A549 (cell line): ENCODE measurements at regions of chr16 and their contacts with region 1.

Region 1: GRCh38 chr16:67816240-67817031 is 9.7 kb downstream of the TSNAXIP1 start:
- DNase-seq: peak; percentile 79 to 80
- ATAC-seq: peak; percentile 93 to 94
- H3K4me3 ChIP-seq: no peak overlapping the region
- H3K27ac ChIP-seq: no peak overlapping the region
- H3K4me1 ChIP-seq: no peaks in the 10 kb centered on the region
- CTCF ChIP-seq: peak; percentile 100
- EP300 ChIP-seq: no peak
- POLR2A ChIP-seq: no peak
- RAD21 ChIP-seq: peak; percentile 82 to 84

Region 2: GRCh38 chr16:67555795-67556212 is 260.6 kb before region 1 on chr16:
- CTCF ChIA-PET with region 1: no interaction called
- POLR2A ChIA-PET with region 1: no interaction called
- DNase-seq: no peak
- ATAC-seq: peak in 1 of 2 experiments; percentile 29; a peak in 3 of 6 replicates
- H3K4me3 ChIP-seq: no peak overlapping the region
- H3K27ac ChIP-seq: peak overlapping the region in 1 of 2 experiments; percentile 16; a peak in 3 of 6 replicates
- H3K4me1 ChIP-seq: peaks cover 13% of the 10 kb centered on the region
- CTCF ChIP-seq: no peak
- EP300 ChIP-seq: no peak
- POLR2A ChIP-seq: no peak
- RAD21 ChIP-seq: no peak

Region 3: GRCh38 chr16:67657801-67658513 is 158.5 kb before region 1 on chr16:
- CTCF ChIA-PET with region 1: no interaction called
- POLR2A ChIA-PET with region 1: no interaction called
- DNase-seq: no peak
- ATAC-seq: no peak
- H3K4me3 ChIP-seq: no peak overlapping the region
- H3K27ac ChIP-seq: no peak overlapping the region
- H3K4me1 ChIP-seq: peaks cover 12% of the 10 kb centered on the region; the same call in 2 of the 3 replicates
- CTCF ChIP-seq: no peak
- EP300 ChIP-seq: no peak
- POLR2A ChIP-seq: no peak
- RAD21 ChIP-seq: no peak

Region 4: DNA sequence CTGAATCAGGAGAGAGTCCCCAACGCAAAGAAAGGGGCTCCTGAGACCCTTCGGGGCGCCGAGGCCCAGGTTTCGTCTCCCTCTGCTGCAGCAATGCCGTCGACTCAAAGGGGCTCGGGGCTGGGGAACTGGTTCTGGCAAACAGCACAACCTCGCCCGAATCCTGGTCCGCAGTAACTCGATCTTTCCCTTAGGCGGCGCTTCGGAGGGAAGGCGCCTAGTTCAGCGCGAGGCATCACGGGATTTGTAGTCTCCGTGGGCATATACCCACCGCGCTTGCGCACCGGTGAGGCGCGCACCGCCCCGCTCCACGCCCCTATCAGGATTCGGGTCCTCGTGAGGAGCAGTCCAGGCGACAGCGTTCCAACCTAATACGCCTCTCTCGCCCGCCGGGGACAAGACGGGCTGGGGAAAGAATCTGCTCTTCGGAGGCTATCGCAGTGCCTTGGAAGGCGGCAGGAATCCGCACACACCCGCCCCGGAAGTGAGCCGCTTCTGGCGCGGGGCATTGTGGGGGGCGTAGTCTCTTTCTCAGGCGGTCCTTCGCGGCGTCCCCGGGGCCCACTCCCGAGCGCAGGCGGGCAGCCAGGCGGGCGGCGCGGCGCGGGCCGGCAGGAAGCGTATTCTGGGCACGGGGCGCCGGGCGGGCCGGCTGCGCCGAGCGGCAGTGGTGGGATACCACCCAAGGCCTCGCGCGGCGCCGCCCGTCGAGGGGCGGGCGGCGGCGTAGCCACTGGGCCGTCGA is 25.5 kb after region 1 on chr16 and contains the start of gene THAP11:
- CTCF ChIA-PET with region 1: interaction called, 187 read pairs
- POLR2A ChIA-PET with region 1: interaction called, 3 read pairs
- DNase-seq: peak; percentile 88 to 96
- ATAC-seq: peak; percentile 65 to 70
- H3K4me3 ChIP-seq: peak within 1 kb of the TSS; percentile 58
- H3K27ac ChIP-seq: peak within 1 kb of the TSS; percentile 97 to 98
- H3K4me1 ChIP-seq: peaks cover 33% of the 10 kb centered on the region
- CTCF ChIP-seq: peak; percentile 58
- EP300 ChIP-seq: no peak
- POLR2A ChIP-seq: peak; percentile 56
- RAD21 ChIP-seq: 0 out of 5 replicates have a peak, but pooled peaks of 1 of the 2 experiments have one; percentile 29
- polyA plus RNA-seq, gene THAP11: 33.2 and 44.0 TPM in 2 replicates

Region 5: DNA sequence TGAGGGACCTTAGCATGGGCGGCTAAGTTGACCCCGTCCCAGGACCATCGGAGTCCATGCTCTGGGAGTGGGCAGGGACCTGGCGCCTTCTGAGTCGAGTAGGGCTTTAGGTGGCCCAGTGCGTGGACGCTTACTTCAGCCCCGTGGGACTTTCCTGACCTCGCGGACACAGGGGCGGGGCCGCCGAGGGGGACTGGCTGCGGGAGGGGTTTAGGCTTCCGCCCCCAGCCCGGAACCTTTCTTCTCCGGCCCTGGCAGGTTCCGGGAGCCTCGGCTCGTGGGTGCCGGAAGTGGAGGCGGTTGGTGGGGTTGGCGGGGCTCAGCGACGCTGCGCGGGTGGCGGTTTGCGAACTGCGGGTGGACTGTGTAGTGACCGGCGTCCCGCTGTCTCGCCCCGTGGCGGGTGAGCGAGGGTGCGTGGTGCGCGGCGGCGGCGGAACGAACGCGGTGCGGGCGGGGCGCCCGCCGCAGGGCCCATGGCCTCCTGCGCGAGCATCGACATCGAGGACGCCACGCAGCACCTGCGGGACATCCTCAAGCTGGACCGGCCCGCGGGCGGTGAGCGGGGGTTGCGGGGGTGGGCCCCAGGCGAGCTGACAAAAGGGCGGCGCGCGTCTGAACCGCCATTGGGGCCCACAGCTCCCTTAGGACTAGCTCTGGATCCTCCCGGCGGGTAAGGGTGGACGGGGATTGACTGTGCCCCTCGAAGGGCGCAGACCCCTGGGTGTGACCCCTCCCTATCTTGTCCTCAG is 56.5 kb after region 1 on chr16 and contains the start of gene EDC4:
- CTCF ChIA-PET with region 1: interaction called, 65 read pairs
- POLR2A ChIA-PET with region 1: no interaction called
- DNase-seq: peak; percentile 83 to 89
- ATAC-seq: peak; percentile 87 to 92
- H3K4me3 ChIP-seq: peak within 1 kb of the TSS; percentile 99
- H3K27ac ChIP-seq: peak within 1 kb of the TSS; percentile 95 to 97
- H3K4me1 ChIP-seq: peaks cover 24% of the 10 kb centered on the region; the same call in 2 of the 3 replicates
- CTCF ChIP-seq: no peak
- EP300 ChIP-seq: peak in 1 of 2 experiments; percentile 7; a peak in 1 of 5 replicates
- POLR2A ChIP-seq: peak; percentile 83
- RAD21 ChIP-seq: no peak
- polyA plus RNA-seq, gene EDC4: 21.0 and 35.3 TPM in 2 replicates

Region 6: GRCh38 chr16:67917852-67918236 is 101.4 kb after region 1 on chr16:
- CTCF ChIA-PET with region 1: interaction called, 49 read pairs
- POLR2A ChIA-PET with region 1: no interaction called
- DNase-seq: peak; percentile 62 to 88
- ATAC-seq: peak; percentile 89 to 90
- H3K4me3 ChIP-seq: no peak overlapping the region
- H3K27ac ChIP-seq: peak overlapping the region in 1 of 2 experiments; percentile 2; a peak in 1 of 6 replicates
- H3K4me1 ChIP-seq: peaks cover 16% of the 10 kb centered on the region
- CTCF ChIP-seq: no peak
- EP300 ChIP-seq: no peak
- POLR2A ChIP-seq: no peak
- RAD21 ChIP-seq: no peak

Region 7: DNA sequence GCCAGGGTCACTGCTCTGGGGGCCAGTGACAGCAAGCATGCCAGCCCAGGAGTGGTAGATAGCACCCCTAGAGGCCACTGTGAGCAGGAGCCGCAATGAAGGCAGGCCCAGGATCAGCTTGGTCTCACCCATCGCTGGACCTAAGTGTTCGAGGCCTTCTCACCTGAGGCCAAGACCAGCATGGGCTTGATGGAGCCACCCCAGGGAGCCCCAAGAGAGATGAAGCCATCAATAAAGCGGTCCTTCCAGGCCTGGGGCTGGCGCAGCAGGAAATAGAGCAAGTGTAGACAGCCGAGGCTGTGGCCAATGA is 125.7 kb after region 1 on chr16:
- CTCF ChIA-PET with region 1: interaction called, 26 read pairs
- POLR2A ChIA-PET with region 1: no interaction called
- DNase-seq: peak; percentile 66 to 67
- ATAC-seq: peak; percentile 79 to 85
- H3K4me3 ChIP-seq: no peak overlapping the region
- H3K27ac ChIP-seq: no peak overlapping the region
- H3K4me1 ChIP-seq: peaks cover 4% of the 10 kb centered on the region; the same call in 2 of the 3 replicates
- CTCF ChIP-seq: peak; percentile 55
- EP300 ChIP-seq: no peak
- POLR2A ChIP-seq: no peak
- RAD21 ChIP-seq: peak; percentile 33 to 47; a peak in 3 of 5 replicates

Region 8: DNA sequence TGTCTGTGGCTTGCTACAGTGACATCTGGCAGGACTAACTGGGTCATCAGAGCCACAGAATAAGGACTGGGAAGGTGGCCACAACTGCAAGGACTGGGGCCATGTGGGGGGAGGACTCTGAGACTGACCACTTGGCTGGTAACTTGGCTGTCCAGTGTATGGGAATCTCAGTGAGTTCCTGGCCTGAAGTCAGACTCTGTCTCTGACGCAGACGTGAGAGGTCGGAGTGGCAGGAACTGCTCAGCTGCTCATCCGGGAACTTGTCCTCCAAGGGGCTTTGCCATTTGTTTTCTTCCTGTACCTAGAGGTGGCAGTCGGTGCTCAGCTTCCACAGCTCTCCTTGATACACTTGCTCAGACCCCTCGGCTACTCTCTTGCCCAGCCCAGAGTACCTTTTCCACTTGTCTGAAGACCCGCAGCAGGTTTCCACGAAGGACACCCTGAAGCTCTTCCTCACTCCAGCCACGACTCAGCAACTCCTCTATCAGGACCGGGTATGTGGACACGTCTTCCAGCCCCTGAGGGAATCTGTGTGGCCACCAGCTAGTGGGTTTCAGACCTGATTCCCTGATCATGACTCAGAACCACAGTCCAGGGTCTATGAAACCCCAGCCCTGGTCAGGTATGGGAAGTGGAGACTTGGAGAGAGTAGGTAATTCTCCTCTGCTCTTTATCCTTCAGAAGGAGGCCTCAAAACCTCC is 171.2 kb after region 1 on chr16:
- CTCF ChIA-PET with region 1: no interaction called
- POLR2A ChIA-PET with region 1: no interaction called
- DNase-seq: no peak
- ATAC-seq: no peak
- H3K4me3 ChIP-seq: no peak overlapping the region
- H3K27ac ChIP-seq: no peak overlapping the region
- H3K4me1 ChIP-seq: peaks cover 7% of the 10 kb centered on the region; the same call in 2 of the 3 replicates
- CTCF ChIP-seq: no peak
- EP300 ChIP-seq: no peak
- POLR2A ChIP-seq: no peak
- RAD21 ChIP-seq: no peak